Heart left ventricle (tissue), 16 donors: ENCODE measurements at regions of chr2 and their contacts with region 1.

Region 1: GRCh38 chr2:157497638-157498314 is 53.9 kb upstream of the CYTIP start:
- DNase-seq: no peak
- ATAC-seq: peak in 3 of 4 donors; percentile 57 to 72 (median 71)
- H3K4me3 ChIP-seq: no peak overlapping the region
- H3K27ac ChIP-seq: no peak overlapping the region
- H3K4me1 ChIP-seq: no peaks in the 10 kb centered on the region
- H3K27me3 ChIP-seq: no peaks in the 10 kb centered on the region
- CTCF ChIP-seq: peak; percentile 43 to 65 (median 57)
- POLR2A ChIP-seq: no peak

Region 2: DNA sequence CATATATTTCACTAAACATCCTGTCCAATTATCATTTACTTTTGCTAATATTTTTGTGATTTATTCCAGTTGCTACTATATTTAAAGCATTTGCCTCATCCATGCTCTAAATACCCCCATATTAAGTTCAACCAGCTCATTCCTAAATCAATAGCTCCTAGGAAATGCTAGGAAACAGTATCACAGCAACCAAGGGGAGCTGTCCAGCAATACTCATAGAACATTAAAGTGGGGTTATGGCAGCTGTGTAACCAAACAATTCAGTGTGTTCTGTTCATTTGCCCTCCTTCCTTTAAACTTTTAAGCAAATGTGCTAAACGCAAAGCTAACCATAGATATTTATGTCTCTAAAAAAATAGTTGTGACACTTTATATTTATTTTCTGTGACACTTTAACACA is 89.8 kb after region 1 on chr2:
- intact Hi-C with region 1: loop called in 2 of 10 experiments (anchors 5 kb)
- DNase-seq: no peak
- ATAC-seq: no peak
- H3K4me3 ChIP-seq: no peak overlapping the region
- H3K27ac ChIP-seq: no peak overlapping the region
- H3K4me1 ChIP-seq: no peaks in the 10 kb centered on the region
- H3K27me3 ChIP-seq: no peaks in the 10 kb centered on the region
- CTCF ChIP-seq: no peak
- POLR2A ChIP-seq: no peak

Region 3: GRCh38 chr2:157596992-157597681 is 99.4 kb after region 1 on chr2:
- intact Hi-C with region 1: loop called in 3 of 10 experiments (anchors 5 kb)
- DNase-seq: peak in 3 of 5 donors; percentile 8 to 34 (median 32)
- ATAC-seq: peak in 2 of 4 donors; percentile 44 to 49
- H3K4me3 ChIP-seq: peak overlapping the region in 3 of 12 donors; percentile 25 to 40 (median 26)
- H3K27ac ChIP-seq: no peak overlapping the region
- H3K4me1 ChIP-seq: no peaks in the 10 kb centered on the region
- H3K27me3 ChIP-seq: peaks cover 0 to 26% (median 3%) of the 10 kb centered on the region in 9 donors
- CTCF ChIP-seq: peak in 11 of 12 donors; percentile 20 to 55 (median 33)
- POLR2A ChIP-seq: no peak

Region 4: DNA sequence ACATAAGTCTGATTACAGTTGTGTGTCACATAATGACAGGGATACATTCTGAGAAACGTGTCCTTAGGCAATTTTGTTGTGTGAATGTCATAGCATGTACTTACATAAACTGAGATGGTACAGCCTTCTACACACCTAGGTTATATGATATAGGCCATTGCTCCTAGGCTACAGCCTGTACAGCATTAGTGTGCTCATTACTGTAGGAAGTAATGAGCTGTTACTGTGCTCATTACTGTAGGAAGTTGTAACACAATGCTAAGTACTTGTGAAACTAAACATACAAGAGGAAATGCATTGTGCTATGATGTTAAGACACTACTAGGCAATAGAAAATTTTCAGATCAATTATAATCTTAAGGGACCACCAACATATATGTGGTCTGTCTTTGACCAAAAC is 676.7 kb after region 1 on chr2:
- intact Hi-C with region 1: no loop called
- DNase-seq: no peak
- ATAC-seq: peak in 1 of 4 donors; percentile 33
- H3K4me3 ChIP-seq: no peak overlapping the region
- H3K27ac ChIP-seq: no peak overlapping the region
- H3K4me1 ChIP-seq: peaks cover 0 to 3% (median 0%) of the 10 kb centered on the region in 12 donors
- H3K27me3 ChIP-seq: no peaks in the 10 kb centered on the region
- CTCF ChIP-seq: no peak
- POLR2A ChIP-seq: no peak